CD14-positive monocyte (primary cell): ENCODE measurements at regions of chr3 and their contacts with region 1.

Region 1: DNA sequence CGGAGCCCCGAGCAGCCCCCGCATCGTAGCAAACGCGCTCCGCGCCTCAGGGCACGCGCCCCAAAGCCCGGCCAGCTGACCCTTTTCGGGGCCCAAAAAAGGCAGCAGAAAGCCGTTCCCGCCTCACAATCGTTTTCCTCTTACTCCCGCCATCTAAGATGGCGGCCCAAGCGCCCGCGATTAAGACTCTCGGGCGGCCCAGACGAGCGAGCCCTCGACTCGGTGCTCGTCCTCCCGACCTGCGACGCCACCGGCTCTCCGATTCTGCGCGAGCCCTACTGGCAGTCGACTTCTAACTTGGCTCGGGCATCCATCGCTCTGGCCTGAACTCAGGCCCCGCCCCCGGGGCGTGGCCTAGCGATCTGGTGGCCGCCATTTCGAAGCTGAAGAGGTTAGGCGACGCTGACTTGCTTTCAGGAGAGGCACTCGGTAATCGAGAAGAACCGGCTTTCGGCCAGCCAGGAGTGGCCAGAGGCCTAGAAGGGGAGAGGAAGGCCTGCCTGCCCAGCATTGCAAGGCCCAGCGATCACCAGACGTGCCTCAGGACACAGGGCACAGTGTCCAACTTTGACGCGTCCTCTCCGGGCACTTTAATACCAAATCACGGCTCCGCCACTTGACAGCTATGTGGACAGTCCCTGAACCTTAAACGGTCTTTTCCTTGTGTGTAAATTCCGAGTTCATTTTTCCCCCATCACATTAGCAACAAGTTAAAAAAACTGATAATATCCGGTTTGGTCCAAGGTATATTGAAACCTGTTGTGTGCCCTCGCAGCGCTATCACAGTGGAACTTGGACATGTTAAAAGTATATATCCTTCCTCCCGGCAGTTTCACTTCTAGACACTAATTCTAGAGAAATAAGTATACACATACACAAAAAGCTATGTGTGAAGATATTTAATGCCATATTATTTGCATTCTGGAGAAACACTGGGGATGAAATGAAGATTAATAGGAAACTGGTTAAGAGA is at the start of gene RAF1:
- DNase-seq: peak; percentile 98 to 99 (median 99)
- H3K4me3 ChIP-seq: peak within 1 kb of the TSS; percentile 72 to 95 (median 91)
- H3K4me3 Mint-ChIP-seq: peak within 1 kb of the TSS; percentile 95 to 97
- H3K27ac ChIP-seq: peak within 1 kb of the TSS; percentile 96
- H3K27ac Mint-ChIP-seq: peak within 1 kb of the TSS; percentile 96 to 99 (median 99)
- H3K4me1 ChIP-seq: peaks cover 26 to 38% of the 10 kb centered on the region in 2 donors
- H3K4me1 Mint-ChIP-seq: peaks cover 37% of the 10 kb centered on the region
- H3K27me3 ChIP-seq: no peaks in the 10 kb centered on the region
- H3K27me3 Mint-ChIP-seq: peaks cover 0 to 2% (median 0%) of the 10 kb centered on the region in 3 donors
- CTCF ChIP-seq: no peak
- polyA plus RNA-seq, gene RAF1: 73.0 to 181 (median 79.5) TPM

Region 2: GRCh38 chr3:12556671-12557472 is 107.3 kb before region 1 on chr3 and contains the start of gene MKRN2:
- intact Hi-C with region 1: loop called in 1 of 2 experiments (anchors 5 kb)
- DNase-seq: peak; percentile 82 to 83 (median 82)
- H3K4me3 ChIP-seq: peak within 1 kb of the TSS; percentile 48 to 89 (median 75)
- H3K4me3 Mint-ChIP-seq: peak within 1 kb of the TSS; percentile 83 to 97
- H3K27ac ChIP-seq: peak within 1 kb of the TSS; percentile 90 to 96
- H3K27ac Mint-ChIP-seq: peak within 1 kb of the TSS; percentile 89 to 96 (median 93)
- H3K4me1 ChIP-seq: peaks cover 35 to 37% of the 10 kb centered on the region in 2 donors
- H3K4me1 Mint-ChIP-seq: peaks cover 51% of the 10 kb centered on the region
- H3K27me3 ChIP-seq: peaks cover 2 to 7% of the 10 kb centered on the region in 2 donors
- H3K27me3 Mint-ChIP-seq: peaks cover 19 to 39% (median 30%) of the 10 kb centered on the region in 3 donors
- CTCF ChIP-seq: no peak
- polyA plus RNA-seq, gene MKRN2: 18.2 to 30.9 (median 29.6) TPM

Region 3: GRCh38 chr3:12648384-12648959 is 15.8 kb before region 1 on chr3:
- intact Hi-C with region 1: loop called in 1 of 2 experiments (anchors 2 kb)
- DNase-seq: peak in 2 of 3 donors; percentile 21 to 75
- H3K4me3 ChIP-seq: peak overlapping the region in 1 of 3 experiments; percentile 45
- H3K4me3 Mint-ChIP-seq: peak overlapping the region in 1 of 2 donors; percentile 31
- H3K27ac ChIP-seq: peak overlapping the region; percentile 78 to 91
- H3K27ac Mint-ChIP-seq: peak overlapping the region; percentile 95 to 98 (median 97)
- H3K4me1 ChIP-seq: peaks cover 27 to 32% of the 10 kb centered on the region in 2 donors
- H3K4me1 Mint-ChIP-seq: peaks cover 55% of the 10 kb centered on the region
- H3K27me3 ChIP-seq: no peaks in the 10 kb centered on the region
- H3K27me3 Mint-ChIP-seq: no peaks in the 10 kb centered on the region
- CTCF ChIP-seq: no peak

Region 4: GRCh38 chr3:12681943-12682390 is 17.7 kb after region 1 on chr3:
- intact Hi-C with region 1: loop called in 1 of 2 experiments (anchors 2 kb)
- DNase-seq: peak; percentile 93 to 99 (median 97)
- H3K4me3 ChIP-seq: peak overlapping the region in 1 of 3 experiments; percentile 41
- H3K4me3 Mint-ChIP-seq: peak overlapping the region; percentile 6 to 13
- H3K27ac ChIP-seq: peak overlapping the region; percentile 93 to 99
- H3K27ac Mint-ChIP-seq: peak overlapping the region; percentile 99 to 100 (median 100)
- H3K4me1 ChIP-seq: peaks cover 44 to 47% of the 10 kb centered on the region in 2 donors
- H3K4me1 Mint-ChIP-seq: peaks cover 30% of the 10 kb centered on the region
- H3K27me3 ChIP-seq: no peaks in the 10 kb centered on the region
- H3K27me3 Mint-ChIP-seq: peaks cover 0 to 2% (median 2%) of the 10 kb centered on the region in 3 donors
- CTCF ChIP-seq: no peak

Region 5: GRCh38 chr3:12719984-12720898 is 56.0 kb after region 1 on chr3:
- intact Hi-C with region 1: loop called in 1 of 2 experiments (anchors 5 kb)
- DNase-seq: peak; percentile 84 to 93 (median 89)
- H3K4me3 ChIP-seq: peak overlapping the region in 1 of 3 experiments; percentile 28
- H3K4me3 Mint-ChIP-seq: peak overlapping the region; percentile 48 to 72
- H3K27ac ChIP-seq: peak overlapping the region in 1 of 2 donors; percentile 31
- H3K27ac Mint-ChIP-seq: peak overlapping the region; percentile 29 to 93 (median 84)
- H3K4me1 ChIP-seq: peaks cover 14 to 20% of the 10 kb centered on the region in 2 donors
- H3K4me1 Mint-ChIP-seq: peaks cover 21% of the 10 kb centered on the region
- H3K27me3 ChIP-seq: no peaks in the 10 kb centered on the region
- H3K27me3 Mint-ChIP-seq: peaks cover 0 to 3% (median 2%) of the 10 kb centered on the region in 3 donors
- CTCF ChIP-seq: peak; percentile 94